ENCODE measurements at regions of chr19 and their contacts with region 1.

Region 1: GRCh38 chr19:6424939-6425731 is 524 bp upstream of the KHSRP start:
- DNase-seq: peak; percentile 100
- H3K4me3 ChIP-seq: no peak overlapping the region
- H3K27ac ChIP-seq: no peak overlapping the region
- H3K4me1 ChIP-seq: peaks cover 8% of the 10 kb centered on the region
- H3K27me3 ChIP-seq: no peaks in the 10 kb centered on the region
- CTCF ChIP-seq: no peak
- POLR2A ChIP-seq: peak; percentile 41

Region 2: DNA sequence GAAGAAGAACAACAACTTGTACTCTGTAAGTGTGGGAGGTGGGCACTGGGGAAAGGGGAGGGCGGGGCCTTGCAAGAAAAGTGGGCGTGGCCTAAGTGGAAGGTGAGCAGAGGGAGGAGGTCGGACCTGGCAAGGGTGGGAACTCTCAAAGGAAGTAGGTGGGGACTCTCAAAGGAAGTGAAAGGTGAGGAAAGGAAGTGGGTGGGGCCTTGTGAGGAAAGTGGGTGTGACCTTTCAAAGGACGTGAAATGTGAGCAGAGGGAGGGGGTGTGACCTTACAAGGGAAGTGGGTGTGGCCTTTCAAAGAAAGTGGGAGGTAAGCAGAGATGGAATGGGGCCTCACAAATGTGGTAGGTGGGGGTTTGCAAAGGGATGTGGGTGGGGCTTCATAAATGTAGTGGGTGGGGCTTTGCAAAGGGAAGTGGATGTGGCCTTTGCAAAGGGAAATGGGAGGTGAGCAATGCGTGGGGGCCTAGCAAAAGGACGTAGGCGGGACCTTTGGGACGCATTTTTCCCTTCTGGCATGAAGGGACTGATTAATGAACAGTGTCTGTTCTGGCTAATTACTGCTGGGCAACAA is 263.8 kb before region 1 on chr19:
- CTCF ChIA-PET with region 1: no interaction called
- POLR2A ChIA-PET with region 1: no interaction called
- dilution Hi-C with region 1: no loop called
- intact Hi-C with region 1: loop called (anchors 10 kb)
- DNase-seq: peak; percentile 7
- H3K4me3 ChIP-seq: no peak overlapping the region
- H3K27ac ChIP-seq: no peak overlapping the region
- H3K4me1 ChIP-seq: no peaks in the 10 kb centered on the region
- H3K27me3 ChIP-seq: no peaks in the 10 kb centered on the region
- CTCF ChIP-seq: no peak
- POLR2A ChIP-seq: no peak

Region 3: DNA sequence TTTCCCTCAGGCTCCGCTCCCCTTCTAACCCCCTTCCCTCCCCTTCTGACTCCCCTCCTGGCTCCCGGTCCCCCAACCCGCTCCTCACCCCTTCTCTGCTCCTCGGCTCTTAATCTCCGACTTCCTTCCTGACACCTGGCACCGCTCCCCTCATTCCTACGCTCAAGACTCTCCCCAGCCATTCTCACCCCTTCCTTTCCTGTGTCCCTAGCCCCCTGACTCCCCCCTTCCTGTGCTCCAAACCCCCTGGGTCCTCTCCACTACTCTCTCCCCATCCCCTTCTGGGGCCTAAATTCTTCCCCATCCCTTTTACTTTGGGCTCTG is 63.1 kb before region 1 on chr19:
- CTCF ChIA-PET with region 1: no interaction called
- POLR2A ChIA-PET with region 1: no interaction called
- dilution Hi-C with region 1: no loop called
- intact Hi-C with region 1: loop called (anchors 1 kb)
- DNase-seq: no peak
- H3K4me3 ChIP-seq: peak overlapping the region; percentile 69 to 95 (median 77)
- H3K27ac ChIP-seq: peak overlapping the region; percentile 57
- H3K4me1 ChIP-seq: peaks cover 7% of the 10 kb centered on the region
- H3K27me3 ChIP-seq: no peaks in the 10 kb centered on the region
- CTCF ChIP-seq: no peak
- POLR2A ChIP-seq: no peak

Region 4: GRCh38 chr19:6372594-6373095 is 52.5 kb before region 1 on chr19 and contains the start of gene ALKBH7:
- CTCF ChIA-PET with region 1: interaction called, 3 read pairs
- POLR2A ChIA-PET with region 1: interaction called, 6 read pairs
- dilution Hi-C with region 1: no loop called
- intact Hi-C with region 1: loop called (anchors 1 kb)
- DNase-seq: peak; percentile 99
- H3K4me3 ChIP-seq: peak within 1 kb of the TSS; percentile 55 to 82 (median 73)
- H3K27ac ChIP-seq: peak within 1 kb of the TSS; percentile 84
- H3K4me1 ChIP-seq: peaks cover 2% of the 10 kb centered on the region
- H3K27me3 ChIP-seq: no peaks in the 10 kb centered on the region
- CTCF ChIP-seq: no peak
- POLR2A ChIP-seq: no peak
- total RNA-seq, gene ALKBH7: 48.8 and 50.4 TPM in 2 replicates

Region 5: GRCh38 chr19:6393074-6393983 is 31.8 kb before region 1 on chr19 and contains the start of gene GTF2F1:
- CTCF ChIA-PET with region 1: no interaction called
- POLR2A ChIA-PET with region 1: no interaction called
- dilution Hi-C with region 1: no loop called
- intact Hi-C with region 1: loop called (anchors 1 kb)
- DNase-seq: peak; percentile 92
- H3K4me3 ChIP-seq: peak within 1 kb of the TSS; percentile 42 to 77 (median 74)
- H3K27ac ChIP-seq: peak within 1 kb of the TSS; percentile 77
- H3K4me1 ChIP-seq: peaks cover 7% of the 10 kb centered on the region
- H3K27me3 ChIP-seq: no peaks in the 10 kb centered on the region
- CTCF ChIP-seq: peak in 1 of 2 donors; percentile 9
- POLR2A ChIP-seq: peak; percentile 75
- total RNA-seq, gene GTF2F1: 56.4 and 58.2 TPM in 2 replicates

Region 6: GRCh38 chr19:6460101-6460853 is 35.1 kb after region 1 on chr19:
- CTCF ChIA-PET with region 1: interaction called, 5 read pairs
- POLR2A ChIA-PET with region 1: no interaction called
- dilution Hi-C with region 1: no loop called
- intact Hi-C with region 1: loop called (anchors 1 kb)
- DNase-seq: peak; percentile 95
- H3K4me3 ChIP-seq: peak overlapping the region; percentile 54 to 72 (median 58)
- H3K27ac ChIP-seq: no peak overlapping the region
- H3K4me1 ChIP-seq: peaks cover 7% of the 10 kb centered on the region
- H3K27me3 ChIP-seq: peaks cover 7 to 15% of the 10 kb centered on the region in 2 experiments
- CTCF ChIP-seq: peak; percentile 63 to 65
- POLR2A ChIP-seq: no peak

Region 7: GRCh38 chr19:6524311-6524710 is 99.2 kb after region 1 on chr19:
- CTCF ChIA-PET with region 1: no interaction called
- POLR2A ChIA-PET with region 1: no interaction called
- dilution Hi-C with region 1: no loop called
- intact Hi-C with region 1: no loop called
- DNase-seq: peak; percentile 56
- H3K4me3 ChIP-seq: no peak overlapping the region
- H3K27ac ChIP-seq: no peak overlapping the region
- H3K4me1 ChIP-seq: no peaks in the 10 kb centered on the region
- H3K27me3 ChIP-seq: no peaks in the 10 kb centered on the region
- CTCF ChIP-seq: no peak
- POLR2A ChIP-seq: no peak